Activated CD4-positive, alpha-beta memory T cell treated with anti-CD3 and anti-CD28 coated beads for 36 hours (primary cell): ENCODE measurements at regions of chr20 and their contacts with region 1.

Region 1: DNA sequence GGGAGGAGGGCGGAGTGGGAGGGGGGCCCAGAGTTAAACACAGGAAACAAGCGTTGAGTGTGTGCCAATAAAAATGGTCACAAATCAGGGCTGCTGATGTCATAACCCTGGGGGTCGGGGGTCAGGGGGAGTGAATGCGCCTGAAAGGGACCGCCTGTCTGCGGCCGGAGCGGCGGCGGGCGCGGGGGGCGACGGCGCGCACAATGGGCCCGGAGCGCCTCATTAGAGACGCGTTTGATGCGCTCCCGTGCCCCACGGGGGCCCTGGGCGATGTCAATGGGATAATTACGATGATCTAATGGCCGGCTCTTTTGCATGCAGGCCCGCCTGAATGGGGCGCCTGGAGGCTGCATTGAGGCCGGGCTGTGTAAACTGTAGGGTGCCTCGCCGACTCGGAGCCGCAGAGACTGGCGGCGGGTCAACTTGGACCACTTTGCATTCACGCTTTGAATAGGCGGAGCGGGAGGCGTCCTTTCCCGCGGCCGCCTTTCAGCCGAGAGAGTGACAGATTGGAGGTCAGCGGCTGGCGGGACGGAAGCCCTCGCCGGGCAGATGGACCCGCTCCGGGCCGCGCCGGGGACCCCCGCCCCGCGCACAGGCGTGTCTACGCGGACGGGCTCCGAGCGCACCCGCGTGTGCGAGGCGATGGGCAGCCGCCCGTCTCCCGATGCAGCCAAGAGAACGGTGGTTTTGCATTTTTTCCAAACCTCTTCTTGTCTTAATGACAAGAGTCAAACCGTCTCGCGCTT is 296.1 kb downstream of the TFAP2C start:
- DNase-seq: no peak
- H3K4me3 Mint-ChIP-seq: no peak overlapping the region
- H3K27ac Mint-ChIP-seq: no peak overlapping the region
- H3K4me1 Mint-ChIP-seq: no peaks in the 10 kb centered on the region
- H3K27me3 Mint-ChIP-seq: peaks cover 49% of the 10 kb centered on the region

Region 2: GRCh38 chr20:56629670-56630478 is 295.4 kb before region 1 on chr20:
- CTCF ChIA-PET with region 1: no interaction called
- POLR2A ChIA-PET with region 1: no interaction called
- intact Hi-C with region 1: loop called (anchors 10 kb)
- DNase-seq: peak; percentile 18
- H3K4me3 Mint-ChIP-seq: no peak overlapping the region
- H3K27ac Mint-ChIP-seq: no peak overlapping the region
- H3K4me1 Mint-ChIP-seq: peaks cover 16% of the 10 kb centered on the region
- H3K27me3 Mint-ChIP-seq: peaks cover 62% of the 10 kb centered on the region

Region 3: GRCh38 chr20:56885521-56885920 is 39.7 kb before region 1 on chr20:
- CTCF ChIA-PET with region 1: no interaction called
- POLR2A ChIA-PET with region 1: no interaction called
- intact Hi-C with region 1: no loop called
- DNase-seq: no peak
- H3K4me3 Mint-ChIP-seq: no peak overlapping the region
- H3K27ac Mint-ChIP-seq: no peak overlapping the region
- H3K4me1 Mint-ChIP-seq: no peaks in the 10 kb centered on the region
- H3K27me3 Mint-ChIP-seq: peaks cover 3% of the 10 kb centered on the region